ENCODE measurements at regions of chr6 and their contacts with region 1.

Region 1: DNA sequence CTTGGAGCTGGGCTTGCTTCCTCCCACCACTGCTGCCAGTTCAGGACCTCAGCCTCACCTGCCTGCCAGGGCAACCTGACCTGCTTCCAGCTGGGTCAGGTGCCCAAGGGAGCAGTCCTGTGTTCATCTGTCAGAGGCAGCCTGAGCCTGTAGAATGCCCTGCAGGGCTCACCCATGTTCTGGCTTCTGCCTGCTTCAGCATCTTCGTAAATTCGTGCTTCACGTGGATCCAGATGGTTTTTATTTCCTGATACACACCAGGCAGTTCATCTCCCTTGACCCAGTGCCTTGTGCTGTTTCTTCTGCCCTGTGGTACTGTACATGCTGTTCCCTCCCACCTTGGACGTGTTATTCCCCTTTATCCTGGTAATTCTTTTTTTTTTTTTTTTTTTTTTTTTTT is 50.2 kb downstream of the ARID1B start:
- H3K4me3 ChIP-seq: no peak overlapping the region
- H3K27ac ChIP-seq: no peak overlapping the region
- H3K4me1 ChIP-seq: peaks cover 16% of the 10 kb centered on the region
- CTCF ChIP-seq: no peak

Region 2: DNA sequence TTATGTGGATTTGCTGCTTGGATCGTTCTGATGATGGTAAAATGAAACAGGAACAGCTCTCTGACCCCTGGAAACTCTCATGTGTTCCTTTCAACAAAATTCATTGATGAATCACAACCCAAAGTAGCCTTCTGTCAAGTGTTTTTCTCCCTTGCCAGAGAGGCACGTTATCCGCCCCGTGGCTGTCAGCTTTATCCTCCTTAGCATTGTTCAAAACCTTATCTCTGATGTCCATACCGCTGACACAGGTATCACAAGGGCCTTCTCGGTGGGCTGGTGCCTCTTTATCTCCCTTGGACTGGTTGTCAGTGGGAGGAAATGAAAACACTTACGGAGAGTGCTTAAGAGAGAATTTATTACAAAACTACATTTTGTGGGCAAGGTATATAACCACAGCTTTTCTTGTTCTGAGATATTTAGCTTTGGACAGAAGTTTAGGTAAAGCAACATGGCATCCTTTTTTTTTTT is 1747.4 kb before region 1 on chr6:
- CTCF ChIA-PET with region 1: no interaction called
- POLR2A ChIA-PET with region 1: interaction called, 12 read pairs
- H3K4me3 ChIP-seq: no peak overlapping the region
- H3K27ac ChIP-seq: no peak overlapping the region
- H3K4me1 ChIP-seq: peaks cover 8% of the 10 kb centered on the region
- CTCF ChIP-seq: no peak

Measured in HEK293 (cell line).